ENCODE measurements at regions of chr10 and their contacts with region 1.

Region 1: DNA sequence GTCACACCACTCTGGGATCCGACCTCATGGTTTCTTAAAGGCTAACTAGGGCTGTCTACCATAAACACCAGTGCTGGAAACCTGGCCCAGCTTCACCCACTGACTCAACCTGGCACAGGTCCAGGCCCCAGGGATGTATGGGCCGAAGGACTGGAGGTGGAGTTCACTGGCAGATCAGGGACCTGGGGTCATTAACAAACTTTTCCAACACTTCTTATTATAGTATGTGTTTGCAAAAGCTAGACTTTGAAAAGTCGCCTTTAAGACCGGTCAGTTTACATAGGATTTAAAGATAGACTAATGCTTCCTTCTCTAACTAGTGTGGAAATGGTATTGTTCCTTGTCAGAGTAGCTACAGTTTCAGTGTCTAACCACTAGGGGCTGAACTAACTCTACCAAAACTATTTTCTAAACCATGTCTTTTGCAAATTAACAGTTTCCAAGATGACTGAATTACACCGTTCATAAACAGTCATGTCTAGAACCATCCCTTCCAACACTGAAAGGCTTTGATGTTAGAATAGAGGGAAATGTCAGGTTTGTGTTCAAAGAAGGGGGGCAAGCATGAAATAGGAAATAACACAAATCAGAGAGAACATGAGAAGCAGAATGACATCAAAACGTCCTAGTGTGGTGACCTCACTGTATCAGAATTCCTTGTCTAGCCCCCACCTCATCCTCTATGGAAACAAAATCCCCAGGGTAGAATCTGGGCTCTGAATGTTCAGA is 29.7 kb downstream of the STN1 start:
- DNase-seq: no peak
- H3K4me3 ChIP-seq: no peak overlapping the region
- CTCF ChIP-seq: peak; percentile 69

Region 2: DNA sequence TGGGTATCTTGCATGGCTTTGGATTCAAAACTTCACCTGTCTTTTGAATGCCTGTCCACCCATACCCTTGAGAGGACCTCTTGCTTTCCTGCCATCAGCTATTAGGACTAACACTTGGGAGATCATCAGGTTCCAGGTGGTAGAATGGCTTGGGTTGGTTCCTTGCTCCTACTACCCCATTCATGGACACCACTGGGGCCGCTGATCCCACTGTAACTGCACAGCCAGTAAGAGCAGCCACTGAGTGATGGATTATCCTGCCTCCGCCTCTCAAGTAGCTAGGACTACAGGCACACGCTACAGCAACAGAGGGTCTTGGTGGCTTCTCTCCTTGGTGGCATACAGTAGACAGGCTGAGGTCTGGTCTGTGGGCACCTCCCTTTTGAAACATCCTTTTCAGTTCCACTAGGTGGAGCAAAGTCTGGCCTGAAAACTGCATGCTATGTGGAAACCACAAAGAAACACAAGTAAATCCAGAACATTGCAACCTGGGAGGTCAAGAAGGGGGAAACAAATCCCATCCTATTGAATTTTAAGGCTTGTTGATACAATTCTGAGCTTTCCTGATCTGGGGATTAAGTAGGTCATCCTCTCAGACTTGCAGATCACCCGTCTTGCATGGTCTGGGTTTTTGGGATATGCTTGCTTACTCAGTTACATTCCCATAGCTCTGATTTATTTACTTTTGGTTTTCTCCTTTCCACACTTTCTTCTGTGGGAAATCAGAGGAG is 1135.2 kb before region 1 on chr10:
- CTCF ChIA-PET with region 1: no interaction called
- POLR2A ChIA-PET with region 1: no interaction called
- DNase-seq: peak; percentile 67
- H3K4me3 ChIP-seq: no peak overlapping the region; the same call in 1 of the 2 replicates
- CTCF ChIP-seq: peak; percentile 58

Region 3: DNA sequence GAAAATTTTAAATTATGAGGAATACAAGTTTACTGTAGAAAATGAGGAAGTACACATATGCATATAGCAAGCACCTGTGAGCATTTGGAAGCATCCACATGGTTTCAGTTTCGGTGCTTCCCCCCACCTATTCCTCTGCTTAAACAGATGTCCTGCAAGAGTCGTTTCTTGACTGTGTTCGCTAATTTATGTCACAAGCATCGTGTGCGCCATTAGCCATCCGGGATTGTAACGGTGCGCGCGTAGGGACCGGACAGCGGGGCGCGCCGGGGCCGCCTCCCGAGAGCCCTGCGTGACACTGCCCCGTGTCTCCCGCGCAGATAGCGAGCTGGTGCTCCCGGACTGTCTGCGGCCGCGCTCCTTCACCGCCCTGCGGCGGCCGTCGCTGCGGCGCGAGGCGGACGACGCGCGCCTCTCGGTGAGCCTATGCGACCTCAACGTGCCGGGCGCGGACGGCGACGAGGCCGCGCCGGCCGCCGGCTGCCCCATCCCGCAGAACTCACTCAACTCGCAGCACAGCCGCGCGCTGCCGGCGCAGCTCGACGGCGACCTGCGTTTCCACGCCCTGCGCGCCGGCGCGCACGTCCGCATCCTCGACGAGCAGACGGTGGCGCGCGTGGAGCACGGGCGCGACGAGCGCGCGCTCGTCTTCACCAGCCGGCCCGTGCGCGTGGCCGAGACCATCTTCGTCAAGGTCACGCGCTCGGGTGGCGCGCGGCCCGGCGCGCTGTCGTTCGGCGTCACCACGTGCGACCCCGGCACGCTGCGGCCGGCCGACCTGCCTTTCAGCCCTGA is 303.9 kb before region 1 on chr10:
- CTCF ChIA-PET with region 1: no interaction called
- POLR2A ChIA-PET with region 1: no interaction called
- DNase-seq: no peak
- H3K4me3 ChIP-seq: peak overlapping the region; percentile 54
- CTCF ChIP-seq: no peak

Region 4: GRCh38 chr10:103685880-103686669 is 202.2 kb before region 1 on chr10:
- CTCF ChIA-PET with region 1: interaction called, 41 read pairs
- POLR2A ChIA-PET with region 1: no interaction called
- DNase-seq: no peak
- H3K4me3 ChIP-seq: no peak overlapping the region
- CTCF ChIP-seq: peak; percentile 95

Region 5: GRCh38 chr10:103712570-103713498 is 175.4 kb before region 1 on chr10:
- CTCF ChIA-PET with region 1: interaction called, 552 read pairs
- POLR2A ChIA-PET with region 1: no interaction called
- DNase-seq: no peak
- H3K4me3 ChIP-seq: no peak overlapping the region
- CTCF ChIP-seq: peak; percentile 79

Region 6: DNA sequence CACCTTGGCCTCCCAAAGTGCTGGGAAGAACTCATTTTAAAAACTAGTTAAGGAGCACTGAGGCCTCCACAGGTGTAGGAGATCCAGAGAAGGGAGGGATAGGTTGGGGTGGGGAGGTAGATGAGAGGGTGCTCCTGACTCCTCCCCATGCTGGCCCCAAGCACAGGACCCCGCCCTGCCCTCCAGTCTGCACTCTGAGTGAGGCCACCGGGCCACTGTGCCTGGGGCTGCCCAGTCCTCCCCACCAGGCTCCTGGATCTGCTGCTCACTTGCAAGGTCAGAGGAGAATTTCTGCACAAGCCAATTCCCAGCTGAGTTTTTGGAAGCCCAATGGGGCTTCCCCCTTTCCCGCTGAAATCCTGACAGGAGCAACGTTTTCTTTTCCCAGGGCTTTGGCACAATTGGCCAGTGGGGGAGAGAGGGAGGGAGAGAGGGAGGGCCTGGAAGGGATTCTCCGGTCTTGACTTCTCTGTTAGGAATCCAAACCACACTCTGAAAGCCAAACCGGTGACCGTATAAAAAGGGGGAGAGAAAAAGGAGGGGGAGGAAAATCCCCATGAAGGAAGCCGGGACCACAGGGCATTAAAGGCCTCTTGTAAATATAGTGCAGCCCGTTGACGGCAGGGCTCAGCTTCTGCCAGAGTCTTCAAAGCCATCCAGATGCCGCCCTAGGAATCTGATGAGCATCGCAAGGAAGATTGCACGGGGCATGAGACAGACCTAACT is 149.1 kb before region 1 on chr10:
- CTCF ChIA-PET with region 1: interaction called, 14 read pairs
- POLR2A ChIA-PET with region 1: no interaction called
- DNase-seq: peak; percentile 84
- H3K4me3 ChIP-seq: peak overlapping the region; percentile 32
- CTCF ChIP-seq: no peak

Region 7: DNA sequence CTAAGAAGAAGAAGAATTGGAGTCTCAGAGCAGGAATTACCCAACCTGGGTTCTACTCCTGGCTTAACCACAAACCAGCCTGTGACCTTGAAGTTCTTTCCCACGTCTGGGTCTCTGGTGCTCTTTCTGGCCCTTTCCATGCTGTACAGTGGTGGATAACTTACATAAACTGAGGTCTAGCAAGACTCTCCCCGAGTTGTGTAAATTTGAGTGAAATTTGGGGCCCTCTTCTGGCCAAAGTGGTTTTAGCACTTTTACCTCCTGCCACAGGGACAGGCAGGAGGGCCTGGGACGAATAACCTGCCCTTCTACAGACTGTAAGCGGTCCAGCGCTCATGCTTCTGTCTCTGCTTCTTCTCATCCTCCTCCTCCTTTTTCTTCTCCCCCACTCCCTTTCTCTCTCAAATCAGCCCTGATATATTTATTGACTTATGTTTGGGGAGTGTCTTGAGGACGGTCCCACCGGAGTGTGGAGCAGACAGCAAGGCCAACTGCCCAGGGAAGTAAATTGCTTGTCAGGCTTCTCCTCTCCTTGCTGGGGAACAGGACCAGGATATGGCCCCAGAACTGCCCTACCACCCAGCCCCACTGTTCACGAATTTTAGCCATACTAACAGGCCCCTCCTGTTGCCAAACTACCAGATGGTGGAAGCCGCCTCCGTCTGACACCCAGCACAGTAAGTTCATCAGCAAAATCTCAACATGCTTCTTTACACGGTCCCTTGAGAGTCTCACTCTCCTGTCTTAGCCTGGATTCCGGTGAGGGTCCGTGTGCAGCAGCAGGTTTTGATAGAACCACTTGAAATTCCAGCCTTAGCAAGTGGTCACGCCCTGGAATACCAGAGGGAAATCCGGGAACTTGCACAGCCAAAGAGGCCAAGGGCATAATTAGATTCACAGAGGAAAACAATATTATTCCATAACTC is 28.9 kb before region 1 on chr10:
- CTCF ChIA-PET with region 1: interaction called, 45 read pairs
- POLR2A ChIA-PET with region 1: no interaction called
- DNase-seq: no peak
- H3K4me3 ChIP-seq: no peak overlapping the region
- CTCF ChIP-seq: peak; percentile 45

Region 8: DNA sequence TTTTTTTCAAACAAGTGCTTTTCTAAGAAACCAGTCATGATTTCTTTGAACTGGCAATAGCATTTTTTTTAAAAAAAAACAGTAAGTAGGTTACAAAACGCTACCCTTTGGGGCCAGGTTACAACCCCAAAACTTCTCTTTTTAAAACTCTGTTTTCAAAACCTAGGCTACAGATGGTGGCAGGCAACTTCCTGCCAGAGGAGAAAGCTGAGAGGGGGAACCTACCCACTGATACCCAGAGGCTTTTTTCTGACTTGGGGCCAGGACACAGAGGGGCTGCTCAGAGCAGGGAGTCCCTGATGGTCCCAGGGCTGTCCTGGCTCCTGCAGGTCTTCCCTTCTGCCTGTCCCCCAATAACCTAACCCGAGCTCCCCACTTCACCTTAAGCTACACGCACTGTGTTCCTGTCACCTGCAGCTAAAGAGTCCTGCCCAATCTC is 22.8 kb after region 1 on chr10:
- CTCF ChIA-PET with region 1: interaction called, 24 read pairs
- POLR2A ChIA-PET with region 1: no interaction called
- DNase-seq: no peak
- H3K4me3 ChIP-seq: no peak overlapping the region
- CTCF ChIP-seq: no peak

Region 9: DNA sequence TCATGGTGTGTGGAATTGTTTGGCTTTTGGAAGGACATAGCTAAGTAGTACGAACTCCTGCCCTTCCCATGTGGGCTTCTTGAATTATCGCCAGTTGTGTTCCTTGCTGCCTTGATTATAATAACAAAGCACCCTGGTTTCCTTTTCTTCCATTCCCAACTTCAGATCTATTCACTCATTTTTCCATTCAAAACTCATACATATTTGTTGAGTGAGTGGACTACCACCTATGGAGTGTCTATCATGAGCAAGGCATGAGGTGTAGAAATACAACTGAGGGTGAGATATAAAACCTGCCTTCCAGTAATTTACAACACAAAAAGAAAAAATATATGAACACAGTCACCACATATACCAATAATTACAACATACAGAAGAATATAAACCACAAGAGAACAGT is 202.3 kb after region 1 on chr10:
- CTCF ChIA-PET with region 1: no interaction called
- POLR2A ChIA-PET with region 1: no interaction called
- DNase-seq: no peak
- H3K4me3 ChIP-seq: no peak overlapping the region
- CTCF ChIP-seq: no peak

Region 10: GRCh38 chr10:104209575-104210198 is 321.4 kb after region 1 on chr10:
- CTCF ChIA-PET with region 1: interaction called, 17 read pairs
- POLR2A ChIA-PET with region 1: no interaction called
- DNase-seq: no peak
- H3K4me3 ChIP-seq: no peak overlapping the region
- CTCF ChIP-seq: peak; percentile 55